ENCODE measurements at regions of chr10 and their contacts with region 1.

Region 1: GRCh38 chr10:78047314-78047891 is 13.7 kb downstream of the RPS24 start:
- DNase-seq: peak; percentile 64
- ATAC-seq: peak; percentile 73
- H3K4me3 ChIP-seq: no peak overlapping the region
- H3K27ac ChIP-seq: no peak overlapping the region
- H3K4me1 ChIP-seq: peaks cover 0 to 21% of the 10 kb centered on the region in 2 experiments; a peak in 2 of 4 replicates
- H3K27me3 ChIP-seq: no peaks in the 10 kb centered on the region
- CTCF ChIP-seq: peak; percentile 73 to 94 (median 87); a peak in 5 of 6 replicates
- POLR2A ChIP-seq: no peak
- RAD21 ChIP-seq: peak; percentile 89

Region 2: GRCh38 chr10:78058562-78058961 is 11.2 kb after region 1 on chr10:
- CTCF ChIA-PET with region 1: interaction called, 14 read pairs
- POLR2A ChIA-PET with region 1: no interaction called
- RAD21 ChIA-PET with region 1: no interaction called
- intact Hi-C with region 1: no loop called
- DNase-seq: no peak
- ATAC-seq: no peak
- H3K4me3 ChIP-seq: no peak overlapping the region
- H3K27ac ChIP-seq: no peak overlapping the region
- H3K4me1 ChIP-seq: no peaks in the 10 kb centered on the region
- H3K27me3 ChIP-seq: no peaks in the 10 kb centered on the region
- CTCF ChIP-seq: no peak
- POLR2A ChIP-seq: no peak
- RAD21 ChIP-seq: no peak

Region 3: GRCh38 chr10:78165617-78166016 is 118.2 kb after region 1 on chr10:
- CTCF ChIA-PET with region 1: no interaction called
- POLR2A ChIA-PET with region 1: no interaction called
- RAD21 ChIA-PET with region 1: no interaction called
- intact Hi-C with region 1: loop called (anchors 1 kb)
- DNase-seq: peak; percentile 26
- ATAC-seq: peak; percentile 90
- H3K4me3 ChIP-seq: no peak overlapping the region
- H3K27ac ChIP-seq: no peak overlapping the region
- H3K4me1 ChIP-seq: peaks cover 0 to 7% of the 10 kb centered on the region in 2 experiments; a peak in 2 of 4 replicates
- H3K27me3 ChIP-seq: no peaks in the 10 kb centered on the region
- CTCF ChIP-seq: peak; percentile 31 to 45 (median 39); a peak in 5 of 6 replicates
- POLR2A ChIP-seq: no peak
- RAD21 ChIP-seq: peak; percentile 61

Region 4: DNA sequence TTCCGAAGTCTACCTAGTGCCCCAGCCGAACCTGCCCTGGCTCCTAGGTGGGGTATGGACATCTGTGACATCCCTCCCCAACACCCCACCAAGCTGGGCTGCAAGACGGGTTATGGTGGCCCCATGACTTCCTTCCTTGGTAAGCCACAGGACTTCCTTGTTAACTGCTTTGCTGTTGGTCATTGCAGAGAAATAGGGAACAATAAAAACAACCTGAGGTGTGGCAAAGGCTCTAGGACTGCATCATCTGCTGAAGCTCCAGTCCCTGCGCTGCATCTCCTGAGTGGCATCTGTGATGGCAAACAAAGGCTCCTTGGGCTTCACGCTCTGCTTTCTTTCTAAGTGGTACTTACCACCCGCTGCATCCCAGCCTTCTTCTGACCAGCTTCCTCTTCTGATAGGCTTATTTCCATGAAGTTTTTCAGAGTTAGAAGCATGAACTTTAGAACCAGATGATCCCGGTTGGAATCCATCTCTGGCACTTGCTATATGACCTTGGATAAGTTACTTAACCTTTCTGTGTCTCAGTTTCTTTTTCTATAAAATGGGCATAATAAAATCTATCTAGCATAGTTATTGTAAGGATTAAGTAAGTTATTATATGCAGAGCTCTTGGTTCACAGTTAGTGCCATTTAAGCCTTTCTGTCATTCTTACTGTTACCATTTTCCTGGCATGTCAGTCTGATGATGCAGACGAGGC is 203.1 kb after region 1 on chr10:
- CTCF ChIA-PET with region 1: no interaction called
- POLR2A ChIA-PET with region 1: no interaction called
- RAD21 ChIA-PET with region 1: no interaction called
- intact Hi-C with region 1: no loop called
- DNase-seq: no peak
- ATAC-seq: no peak
- H3K4me3 ChIP-seq: no peak overlapping the region
- H3K27ac ChIP-seq: no peak overlapping the region
- H3K4me1 ChIP-seq: peaks cover under 1 to 17% of the 10 kb centered on the region in 2 experiments; a peak in 3 of 4 replicates
- H3K27me3 ChIP-seq: no peaks in the 10 kb centered on the region
- CTCF ChIP-seq: no peak
- POLR2A ChIP-seq: no peak
- RAD21 ChIP-seq: no peak

Region 5: DNA sequence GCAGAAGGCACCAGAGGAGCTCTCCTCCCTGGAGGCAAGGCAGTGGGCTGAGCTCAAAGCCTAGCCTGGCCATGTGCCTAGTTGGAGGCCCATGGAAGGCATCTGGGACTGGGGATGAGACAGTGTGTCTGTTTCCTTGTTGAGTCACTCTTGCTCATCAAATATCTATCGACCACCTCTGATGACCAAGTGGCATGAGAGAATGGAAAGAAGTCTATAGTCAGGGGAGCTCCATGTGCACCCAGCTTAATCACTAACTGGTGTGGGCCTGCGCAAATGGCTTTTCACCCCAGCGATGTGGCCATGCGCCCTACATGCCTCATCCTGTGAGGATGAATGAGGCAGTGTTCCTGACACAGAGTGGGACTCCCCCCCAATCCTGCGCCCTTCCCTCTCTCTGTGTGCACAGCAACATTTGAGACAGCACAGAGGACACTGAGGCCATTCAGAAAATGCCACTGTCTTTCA is 216.2 kb after region 1 on chr10:
- CTCF ChIA-PET with region 1: no interaction called
- POLR2A ChIA-PET with region 1: no interaction called
- RAD21 ChIA-PET with region 1: no interaction called
- intact Hi-C with region 1: no loop called
- DNase-seq: no peak
- ATAC-seq: 0 out of 2 replicates have a peak, but pooled peaks have one; percentile 22
- H3K4me3 ChIP-seq: no peak overlapping the region
- H3K27ac ChIP-seq: no peak overlapping the region
- H3K4me1 ChIP-seq: peaks cover 0 to 11% of the 10 kb centered on the region in 2 experiments; a peak in 2 of 4 replicates
- H3K27me3 ChIP-seq: no peaks in the 10 kb centered on the region
- CTCF ChIP-seq: no peak
- POLR2A ChIP-seq: no peak
- RAD21 ChIP-seq: no peak

Region 6: GRCh38 chr10:78302989-78303854 is 255.8 kb after region 1 on chr10:
- CTCF ChIA-PET with region 1: interaction called, 3 read pairs
- POLR2A ChIA-PET with region 1: no interaction called
- RAD21 ChIA-PET with region 1: no interaction called
- intact Hi-C with region 1: loop called (anchors 5 kb)
- DNase-seq: peak; percentile 85
- ATAC-seq: peak; percentile 96
- H3K4me3 ChIP-seq: peak overlapping the region; percentile 56 to 60
- H3K27ac ChIP-seq: peak overlapping the region; percentile 58
- H3K4me1 ChIP-seq: peaks cover 14 to 19% of the 10 kb centered on the region in 2 experiments
- H3K27me3 ChIP-seq: peaks cover 5% of the 10 kb centered on the region; the same call in 1 of the 2 replicates
- CTCF ChIP-seq: peak; percentile 19 to 83 (median 62); a peak in 4 of 6 replicates
- POLR2A ChIP-seq: peak; percentile 79
- RAD21 ChIP-seq: peak; percentile 37

Region 7: DNA sequence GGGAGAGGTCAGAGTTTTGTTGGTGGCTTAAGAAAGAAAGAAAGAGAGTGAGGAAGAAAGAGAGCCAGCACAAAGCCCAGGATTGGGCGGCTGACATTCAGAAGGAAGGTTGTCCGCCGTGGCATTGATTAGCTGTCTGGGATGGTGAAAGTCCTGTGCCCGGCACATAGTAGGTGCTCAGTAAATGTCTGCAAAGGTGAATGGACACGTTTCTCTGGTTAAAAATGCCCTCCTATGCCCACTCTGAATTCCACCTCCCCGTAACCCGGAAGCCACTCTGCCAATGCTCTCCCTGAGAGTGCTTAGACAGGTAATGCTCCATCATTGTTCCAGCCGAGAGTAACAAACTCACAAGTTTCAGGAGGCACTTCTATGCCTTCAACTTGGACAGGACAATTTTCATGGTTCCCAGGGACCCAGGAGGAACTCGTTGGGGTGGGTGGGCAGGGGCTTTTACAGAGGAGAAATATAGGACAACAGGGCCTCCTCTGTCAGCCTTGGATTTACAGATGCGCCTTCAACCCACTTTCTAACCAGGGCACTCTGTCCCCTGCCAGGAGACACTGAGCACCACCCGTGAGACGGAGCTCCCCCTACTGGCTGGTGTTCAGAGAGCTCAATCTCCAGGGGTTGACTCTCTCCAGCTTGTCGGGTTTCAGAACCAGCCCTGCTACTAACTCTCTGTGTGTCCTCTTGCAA is 609.9 kb after region 1 on chr10:
- CTCF ChIA-PET with region 1: interaction called, 4 read pairs
- POLR2A ChIA-PET with region 1: no interaction called
- RAD21 ChIA-PET with region 1: no interaction called
- intact Hi-C with region 1: loop called (anchors 5 kb)
- DNase-seq: peak; percentile 43
- ATAC-seq: peak; percentile 99
- H3K4me3 ChIP-seq: no peak overlapping the region
- H3K27ac ChIP-seq: no peak overlapping the region
- H3K4me1 ChIP-seq: no peaks in the 10 kb centered on the region
- H3K27me3 ChIP-seq: peaks cover 27% of the 10 kb centered on the region; the same call in 1 of the 2 replicates
- CTCF ChIP-seq: peak; percentile 55 to 92 (median 74); a peak in 5 of 6 replicates
- POLR2A ChIP-seq: no peak
- RAD21 ChIP-seq: peak; percentile 79

Region 8: DNA sequence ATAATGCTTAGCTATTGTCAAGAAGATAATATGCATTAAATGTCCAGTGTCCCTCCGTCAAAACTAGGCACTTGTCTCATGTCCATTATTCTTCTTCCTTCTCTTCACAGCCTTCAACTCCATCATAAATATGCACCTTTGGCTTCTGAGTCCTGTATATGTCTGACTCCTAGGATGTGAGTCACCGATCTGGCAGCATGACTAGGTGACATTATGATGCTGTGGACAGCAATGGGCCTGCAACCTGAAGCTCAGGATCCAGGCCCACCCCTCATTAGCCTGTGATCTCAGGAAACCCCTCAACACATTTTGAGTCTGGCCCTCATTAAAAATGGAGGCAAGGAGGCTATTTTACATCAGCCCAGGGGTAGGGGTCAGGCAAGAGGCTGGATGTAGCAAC is 658.9 kb after region 1 on chr10:
- CTCF ChIA-PET with region 1: no interaction called
- POLR2A ChIA-PET with region 1: no interaction called
- RAD21 ChIA-PET with region 1: no interaction called
- intact Hi-C with region 1: loop called (anchors 5 kb)
- DNase-seq: no peak
- ATAC-seq: peak; percentile 70
- H3K4me3 ChIP-seq: no peak overlapping the region
- H3K27ac ChIP-seq: no peak overlapping the region
- H3K4me1 ChIP-seq: peaks cover 0 to 10% of the 10 kb centered on the region in 2 experiments; a peak in 2 of 4 replicates
- H3K27me3 ChIP-seq: no peaks in the 10 kb centered on the region; the same call in 1 of the 2 replicates
- CTCF ChIP-seq: no peak
- POLR2A ChIP-seq: no peak
- RAD21 ChIP-seq: no peak

Measured in HCT116 (cell line).